Calu3 (cell line): ENCODE measurements at regions of chr17 and their contacts with region 1.

Region 1: GRCh38 chr17:74408262-74408661 is 23.6 kb upstream of the GPRC5C start:
- DNase-seq: peak; percentile 66
- H3K4me3 Mint-ChIP-seq: no peak overlapping the region
- H3K27ac Mint-ChIP-seq: no peak overlapping the region
- H3K4me1 Mint-ChIP-seq: no peaks in the 10 kb centered on the region
- H3K27me3 Mint-ChIP-seq: peaks cover 20% of the 10 kb centered on the region
- CTCF ChIP-seq: no peak

Region 2: GRCh38 chr17:74259667-74260524 is 148.4 kb before region 1 on chr17:
- CTCF ChIA-PET with region 1: no interaction called
- intact Hi-C with region 1: no loop called
- DNase-seq: no peak
- H3K4me3 Mint-ChIP-seq: no peak overlapping the region
- H3K27ac Mint-ChIP-seq: no peak overlapping the region
- H3K4me1 Mint-ChIP-seq: no peaks in the 10 kb centered on the region
- H3K27me3 Mint-ChIP-seq: peaks cover 68% of the 10 kb centered on the region
- CTCF ChIP-seq: no peak

Region 3: DNA sequence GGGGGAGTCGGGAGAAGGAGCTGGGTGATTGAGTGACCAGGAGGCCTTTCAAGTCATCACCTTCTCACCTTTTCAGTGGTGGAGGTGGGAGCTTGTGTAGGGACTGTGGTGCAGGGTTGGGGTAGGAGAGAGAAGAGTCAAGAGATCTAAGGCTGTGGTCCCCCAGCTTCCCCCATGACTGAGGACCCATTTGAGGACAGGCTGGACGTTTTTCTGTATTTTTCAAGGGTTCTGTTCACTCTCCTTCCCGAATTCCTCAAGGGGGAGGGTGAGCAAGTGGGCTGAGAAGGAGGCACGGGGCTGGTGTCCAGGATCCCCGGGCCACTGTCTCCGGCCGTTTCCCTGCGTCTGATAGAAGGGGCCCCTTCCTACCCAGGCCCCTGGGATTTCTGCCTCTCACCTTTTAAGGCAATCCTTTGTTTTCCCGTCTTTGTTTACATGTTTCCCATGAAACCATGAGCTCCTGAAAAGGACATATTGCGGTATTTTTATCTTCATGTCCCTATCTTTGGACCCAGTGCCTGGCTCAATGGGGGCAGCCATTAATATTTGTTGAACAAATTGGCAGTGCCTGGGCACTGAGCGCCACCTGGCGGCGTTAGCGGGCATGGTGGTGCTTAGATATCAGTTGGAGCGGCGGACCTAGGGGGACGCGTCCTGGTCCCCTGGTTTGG is 49.0 kb after region 1 on chr17:
- CTCF ChIA-PET with region 1: interaction called, 5 read pairs
- intact Hi-C with region 1: loop called (anchors 1 kb)
- DNase-seq: peak; percentile 78
- H3K4me3 Mint-ChIP-seq: no peak overlapping the region
- H3K27ac Mint-ChIP-seq: no peak overlapping the region
- H3K4me1 Mint-ChIP-seq: no peaks in the 10 kb centered on the region
- H3K27me3 Mint-ChIP-seq: peaks cover 47% of the 10 kb centered on the region
- CTCF ChIP-seq: peak; percentile 98

Region 4: GRCh38 chr17:74520016-74520434 is 111.8 kb after region 1 on chr17:
- CTCF ChIA-PET with region 1: no interaction called
- intact Hi-C with region 1: no loop called
- DNase-seq: no peak
- H3K4me3 Mint-ChIP-seq: no peak overlapping the region
- H3K27ac Mint-ChIP-seq: no peak overlapping the region
- H3K4me1 Mint-ChIP-seq: no peaks in the 10 kb centered on the region
- H3K27me3 Mint-ChIP-seq: peaks cover 87% of the 10 kb centered on the region
- CTCF ChIP-seq: no peak

Region 5: GRCh38 chr17:74654742-74655141 is 246.5 kb after region 1 on chr17:
- CTCF ChIA-PET with region 1: no interaction called
- intact Hi-C with region 1: no loop called
- DNase-seq: no peak
- H3K4me3 Mint-ChIP-seq: no peak overlapping the region
- H3K27ac Mint-ChIP-seq: no peak overlapping the region
- H3K4me1 Mint-ChIP-seq: no peaks in the 10 kb centered on the region
- H3K27me3 Mint-ChIP-seq: peaks cover 100% of the 10 kb centered on the region
- CTCF ChIP-seq: no peak